ENCODE measurements at regions of chr21 and their contacts with region 1.

Region 1: GRCh38 chr21:17576080-17576835 is 36.4 kb downstream of the BTG3 start:
- DNase-seq: no peak
- ATAC-seq: peak; percentile 38 to 75 (median 50)
- H3K4me3 ChIP-seq: no peak overlapping the region
- H3K27ac ChIP-seq: no peak overlapping the region
- H3K4me1 ChIP-seq: no peaks in the 10 kb centered on the region
- H3K27me3 ChIP-seq: no peaks in the 10 kb centered on the region
- CTCF ChIP-seq: no peak
- POLR2A ChIP-seq: no peak

Region 2: DNA sequence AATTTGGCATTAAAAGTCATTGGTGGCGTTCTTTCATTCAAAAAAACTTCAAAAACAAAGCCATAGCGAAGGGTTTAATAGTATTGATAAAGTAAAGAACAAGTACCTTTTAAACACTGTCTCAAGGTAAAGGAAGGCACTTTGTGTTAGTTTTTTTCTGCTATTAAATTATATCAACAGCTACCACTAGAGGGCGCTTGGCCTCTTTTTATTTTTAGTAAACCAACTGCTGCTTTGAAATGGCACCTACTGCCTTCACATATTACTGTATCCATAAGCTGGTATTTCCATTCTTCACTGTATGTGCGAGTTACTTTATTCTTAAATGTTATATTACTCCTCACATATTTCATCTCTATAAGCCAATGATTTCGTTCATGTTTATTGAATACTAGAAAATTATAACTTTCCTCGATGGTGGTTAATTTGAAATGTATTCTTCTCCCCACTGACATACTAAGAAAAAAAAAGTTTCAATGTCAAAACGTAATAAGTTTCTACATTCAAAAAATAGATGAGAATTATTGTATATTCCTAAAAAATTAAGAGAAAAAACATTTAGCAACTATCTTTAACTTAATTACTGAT is 189.1 kb before region 1 on chr21:
- intact Hi-C with region 1: loop called in 1 of 2 experiments (anchors 10 kb)
- DNase-seq: no peak
- ATAC-seq: peak; percentile 78 to 92 (median 86)
- H3K4me3 ChIP-seq: no peak overlapping the region
- H3K27ac ChIP-seq: no peak overlapping the region
- H3K4me1 ChIP-seq: no peaks in the 10 kb centered on the region
- H3K27me3 ChIP-seq: no peaks in the 10 kb centered on the region
- CTCF ChIP-seq: peak; percentile 81 to 83 (median 82)
- POLR2A ChIP-seq: no peak

Region 3: GRCh38 chr21:17414766-17415165 is 161.5 kb before region 1 on chr21:
- intact Hi-C with region 1: no loop called
- DNase-seq: no peak
- ATAC-seq: no peak
- H3K4me3 ChIP-seq: no peak overlapping the region
- H3K27ac ChIP-seq: no peak overlapping the region
- H3K4me1 ChIP-seq: no peaks in the 10 kb centered on the region
- H3K27me3 ChIP-seq: no peaks in the 10 kb centered on the region
- CTCF ChIP-seq: no peak
- POLR2A ChIP-seq: no peak

Region 4: DNA sequence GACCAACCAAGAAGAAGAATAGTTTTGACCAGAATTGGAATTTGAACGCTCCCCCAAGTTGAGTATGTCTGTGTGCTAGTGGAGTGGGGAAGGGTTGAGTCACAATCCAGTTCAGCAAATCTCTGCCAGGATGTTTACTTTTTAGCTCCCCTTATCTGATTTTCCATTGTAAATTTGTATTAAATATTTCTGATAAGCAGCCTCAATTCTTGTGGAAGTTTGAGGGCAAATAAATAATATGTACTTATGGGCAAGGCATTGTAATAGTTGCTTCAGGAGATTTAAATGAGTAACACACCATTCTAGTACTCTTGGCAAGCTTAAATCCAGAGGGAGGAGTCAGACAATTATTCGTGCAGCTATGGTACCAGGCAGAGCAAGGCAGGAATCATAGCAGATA is 49.0 kb before region 1 on chr21:
- intact Hi-C with region 1: no loop called
- DNase-seq: no peak
- ATAC-seq: peak; percentile 29 to 40 (median 34)
- H3K4me3 ChIP-seq: no peak overlapping the region
- H3K27ac ChIP-seq: no peak overlapping the region
- H3K4me1 ChIP-seq: peaks cover 0 to 34% (median 14%) of the 10 kb centered on the region in 4 donors
- H3K27me3 ChIP-seq: no peaks in the 10 kb centered on the region
- CTCF ChIP-seq: no peak
- POLR2A ChIP-seq: no peak

Region 5: DNA sequence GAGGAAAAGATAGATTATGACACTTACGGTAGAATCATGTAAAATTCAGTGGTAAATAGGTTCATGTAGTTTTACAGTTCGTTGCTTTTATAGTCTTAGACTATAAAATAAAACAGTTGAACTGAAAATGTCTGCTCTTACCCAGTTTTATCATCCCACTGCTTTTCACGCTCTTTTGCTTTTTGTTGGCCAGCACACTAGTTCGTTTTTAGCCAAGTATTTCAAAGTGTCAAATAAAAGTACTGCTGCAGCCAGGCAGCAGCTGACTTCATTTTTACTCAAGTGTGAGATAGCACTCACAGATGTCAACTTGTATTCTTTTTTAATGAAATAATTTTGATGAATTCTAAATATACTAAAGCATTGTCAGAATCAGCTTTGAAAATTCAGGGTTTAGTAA is 54.9 kb after region 1 on chr21:
- intact Hi-C with region 1: no loop called
- DNase-seq: no peak
- ATAC-seq: no peak
- H3K4me3 ChIP-seq: no peak overlapping the region
- H3K27ac ChIP-seq: no peak overlapping the region
- H3K4me1 ChIP-seq: no peaks in the 10 kb centered on the region
- H3K27me3 ChIP-seq: no peaks in the 10 kb centered on the region
- CTCF ChIP-seq: no peak
- POLR2A ChIP-seq: no peak